Posterior cingulate gyrus (tissue), 11 donors: ENCODE measurements at regions of chr11 and their contacts with region 1.

Region 1: GRCh38 chr11:46616998-46617675 is at the starts of genes ATG13 and HARBI1:
- DNase-seq: peak; percentile 79 to 99 (median 88)

Region 2: DNA sequence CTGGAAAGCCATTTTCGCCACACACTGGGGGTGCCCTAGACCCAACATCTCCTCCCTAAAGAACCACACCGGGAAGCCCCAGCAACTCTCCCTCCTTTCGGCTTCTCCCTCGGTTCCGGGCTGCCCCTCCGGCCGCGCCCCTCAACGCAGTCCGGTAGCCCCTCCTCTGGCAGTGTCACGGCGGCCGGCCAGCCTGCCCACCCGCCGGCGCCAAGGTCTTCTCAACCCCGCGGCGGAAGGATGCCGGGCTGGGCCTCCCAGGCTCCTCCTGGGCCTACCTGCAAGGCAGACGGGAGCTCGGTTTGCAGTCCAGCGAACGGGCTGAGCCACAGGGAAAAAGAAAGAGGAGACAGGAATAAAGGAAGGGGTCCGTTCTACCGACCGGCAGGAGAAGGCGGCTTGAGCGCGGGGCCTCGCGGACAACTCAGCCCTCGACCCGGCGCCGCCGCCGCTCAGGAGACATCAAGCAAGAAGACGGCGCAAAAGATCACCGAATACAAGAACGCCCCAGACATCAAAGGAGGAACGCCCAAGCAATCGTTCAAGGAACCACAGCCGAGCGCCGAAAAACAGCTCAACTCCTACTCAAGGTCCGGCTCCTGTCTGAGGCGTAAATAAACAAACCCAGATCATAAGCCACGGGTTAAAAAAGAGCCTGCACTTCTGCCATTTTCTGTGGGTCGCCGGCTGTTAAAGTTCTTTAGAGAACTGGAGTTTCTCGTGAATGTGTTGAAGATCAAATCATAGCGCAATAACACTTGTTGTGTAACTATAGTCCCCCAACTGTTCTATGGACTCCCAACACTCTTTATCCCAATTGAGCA is 23.4 kb before region 1 on chr11 and contains the start of gene AMBRA1:
- intact Hi-C with region 1: loop called (anchors 1 kb)
- DNase-seq: peak; percentile 77 to 98 (median 89)

Region 3: DNA sequence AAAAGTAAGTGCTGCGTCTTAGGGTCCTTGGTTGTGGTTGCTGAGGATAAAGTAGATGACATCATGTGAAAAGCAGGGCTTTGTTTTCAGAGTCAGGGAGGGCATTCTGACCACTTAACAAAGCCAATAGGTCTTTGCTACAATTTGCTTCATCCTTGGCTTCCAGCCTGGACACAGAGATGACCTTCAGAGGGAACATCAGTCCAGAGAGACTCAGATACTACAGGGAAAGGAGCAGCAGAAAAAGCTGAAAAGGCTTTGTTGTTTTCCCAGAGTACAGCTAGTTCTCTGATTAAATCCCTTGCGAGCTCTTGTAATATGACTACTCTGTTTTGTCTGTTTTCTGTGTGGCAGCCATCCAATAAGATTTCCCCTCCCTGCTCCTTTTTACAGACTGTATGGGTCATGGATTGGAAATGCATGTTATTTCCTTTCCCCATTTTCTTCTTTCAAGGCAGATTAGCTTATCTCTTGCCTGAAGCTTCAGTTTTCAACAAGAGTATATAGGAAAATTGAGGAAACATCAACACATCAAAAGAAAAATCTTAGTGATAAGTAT is 32.1 kb after region 1 on chr11:
- intact Hi-C with region 1: no loop called
- DNase-seq: peak in 6 of 10 donors; percentile 13 to 73 (median 40)